ENCODE measurements at regions of chr9 and their contacts with region 1.

Region 1: GRCh38 chr9:7011395-7012067 is 253.8 kb downstream of the KDM4C start:
- DNase-seq: no peak
- ATAC-seq: peak; percentile 30
- H3K4me3 Mint-ChIP-seq: no peak overlapping the region
- H3K27ac Mint-ChIP-seq: no peak overlapping the region
- H3K4me1 Mint-ChIP-seq: peaks cover 3% of the 10 kb centered on the region
- H3K27me3 Mint-ChIP-seq: no peaks in the 10 kb centered on the region

Region 2: GRCh38 chr9:6917162-6917561 is 94.4 kb before region 1 on chr9:
- CTCF ChIA-PET with region 1: no interaction called
- POLR2A ChIA-PET with region 1: no interaction called
- intact Hi-C with region 1: loop called in 1 of 2 experiments (anchors 5 kb)
- DNase-seq: no peak
- ATAC-seq: peak; percentile 64
- H3K4me3 Mint-ChIP-seq: no peak overlapping the region
- H3K27ac Mint-ChIP-seq: no peak overlapping the region
- H3K4me1 Mint-ChIP-seq: peaks cover 31% of the 10 kb centered on the region
- H3K27me3 Mint-ChIP-seq: no peaks in the 10 kb centered on the region